ENCODE measurements at regions of chr13 and their contacts with region 1.

Region 1: GRCh38 chr13:19927117-19927748 is 31.3 kb upstream of the ZMYM2 start:
- DNase-seq: peak; percentile 61
- H3K4me3 Mint-ChIP-seq: no peak overlapping the region
- H3K27ac Mint-ChIP-seq: no peak overlapping the region
- H3K4me1 Mint-ChIP-seq: peaks cover 6% of the 10 kb centered on the region
- H3K27me3 Mint-ChIP-seq: no peaks in the 10 kb centered on the region
- CTCF ChIP-seq: peak; percentile 52

Region 2: DNA sequence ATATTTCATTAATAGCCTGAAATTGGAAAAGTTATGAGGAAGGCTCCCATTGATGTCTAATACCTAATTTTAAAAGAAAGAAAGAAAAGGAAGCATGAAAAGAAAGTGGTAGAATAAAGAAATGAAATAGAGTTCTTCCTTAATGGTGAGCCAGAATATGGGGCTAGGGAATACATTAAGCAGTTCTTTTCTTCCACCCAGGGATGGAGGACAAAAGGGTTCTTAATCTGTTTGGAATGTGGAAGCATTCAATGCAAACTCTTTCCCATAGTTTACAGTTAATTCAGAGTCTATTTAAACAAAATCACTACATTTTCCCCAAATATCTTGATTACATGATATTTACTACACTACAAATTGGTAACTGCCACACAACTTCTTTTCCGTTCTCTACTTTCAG is 12.9 kb after region 1 on chr13:
- CTCF ChIA-PET with region 1: interaction called, 19 read pairs
- POLR2A ChIA-PET with region 1: interaction called, 5 read pairs
- intact Hi-C with region 1: no loop called
- DNase-seq: no peak
- H3K4me3 Mint-ChIP-seq: no peak overlapping the region
- H3K27ac Mint-ChIP-seq: no peak overlapping the region
- H3K4me1 Mint-ChIP-seq: no peaks in the 10 kb centered on the region
- H3K27me3 Mint-ChIP-seq: no peaks in the 10 kb centered on the region
- CTCF ChIP-seq: no peak

Region 3: DNA sequence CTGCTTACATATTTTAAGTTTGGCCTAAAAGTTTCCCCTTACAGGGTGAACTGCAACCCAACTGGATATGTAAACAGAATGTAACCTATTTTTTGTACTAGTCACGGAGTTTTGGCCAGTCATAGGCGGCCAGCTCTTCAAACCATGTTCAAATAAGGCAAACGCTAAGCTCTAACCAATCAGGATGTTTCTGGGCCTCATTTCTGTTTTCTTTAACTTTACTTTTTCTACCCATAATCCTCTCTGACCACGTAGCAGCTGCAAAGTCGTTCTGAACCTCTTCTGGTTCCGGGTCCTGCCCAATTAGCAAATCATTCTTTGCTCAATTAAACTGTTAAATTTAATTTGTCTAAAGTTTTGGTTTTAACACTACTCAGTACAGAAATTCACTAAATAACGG is 23.1 kb after region 1 on chr13:
- CTCF ChIA-PET with region 1: interaction called, 21 read pairs
- POLR2A ChIA-PET with region 1: interaction called, 4 read pairs
- intact Hi-C with region 1: no loop called
- DNase-seq: no peak
- H3K4me3 Mint-ChIP-seq: no peak overlapping the region
- H3K27ac Mint-ChIP-seq: no peak overlapping the region
- H3K4me1 Mint-ChIP-seq: no peaks in the 10 kb centered on the region
- H3K27me3 Mint-ChIP-seq: no peaks in the 10 kb centered on the region
- CTCF ChIP-seq: no peak

Region 4: DNA sequence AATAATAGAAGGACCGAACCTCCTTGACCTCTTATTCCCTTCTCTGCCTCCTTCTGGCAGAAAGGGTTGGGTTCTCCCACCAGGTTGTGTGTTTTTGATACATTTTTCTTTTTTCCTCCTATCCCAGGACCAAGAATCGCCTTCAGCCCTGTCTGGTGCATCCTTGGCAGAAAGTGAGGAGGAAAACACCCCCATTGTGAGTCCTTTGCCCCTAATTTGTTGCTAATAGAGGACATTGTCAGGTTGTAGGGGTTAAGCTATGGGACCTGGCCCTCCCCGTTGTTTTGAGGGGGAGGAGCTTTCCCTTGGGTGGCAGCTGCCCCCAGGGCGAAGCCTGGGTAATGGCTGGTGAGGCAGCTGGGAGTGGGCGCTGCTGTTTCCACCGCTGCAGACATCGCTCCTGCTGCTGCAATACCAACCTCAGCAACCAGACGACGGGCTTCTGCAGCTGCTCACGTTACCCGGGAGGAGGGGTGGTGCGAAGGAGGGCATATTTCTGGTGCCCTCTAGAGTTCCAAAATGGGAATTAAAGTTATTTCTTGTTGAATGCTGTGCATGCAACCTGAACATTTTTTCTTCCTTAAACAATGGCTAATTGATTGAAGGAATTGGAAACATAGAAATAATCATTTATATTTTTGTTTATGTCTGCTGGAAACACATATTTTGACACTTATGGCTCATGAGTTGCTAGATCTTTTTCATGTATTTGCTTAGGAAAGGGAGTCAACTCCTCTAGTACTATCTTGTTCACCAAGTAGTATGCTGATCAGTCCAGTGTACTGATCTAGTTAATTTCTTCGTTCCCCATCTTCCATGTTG is 32.8 kb after region 1 on chr13:
- CTCF ChIA-PET with region 1: interaction called, 15 read pairs
- POLR2A ChIA-PET with region 1: interaction called, 10 read pairs
- intact Hi-C with region 1: loop called (anchors 1 kb)
- DNase-seq: peak; percentile 92
- H3K4me3 Mint-ChIP-seq: peak overlapping the region; percentile 92
- H3K27ac Mint-ChIP-seq: peak overlapping the region; percentile 88
- H3K4me1 Mint-ChIP-seq: peaks cover 6% of the 10 kb centered on the region
- H3K27me3 Mint-ChIP-seq: no peaks in the 10 kb centered on the region
- CTCF ChIP-seq: peak; percentile 71

Measured in MCF 10A (cell line).